ENCODE measurements at regions of chr19 and their contacts with region 1.

Region 1: DNA sequence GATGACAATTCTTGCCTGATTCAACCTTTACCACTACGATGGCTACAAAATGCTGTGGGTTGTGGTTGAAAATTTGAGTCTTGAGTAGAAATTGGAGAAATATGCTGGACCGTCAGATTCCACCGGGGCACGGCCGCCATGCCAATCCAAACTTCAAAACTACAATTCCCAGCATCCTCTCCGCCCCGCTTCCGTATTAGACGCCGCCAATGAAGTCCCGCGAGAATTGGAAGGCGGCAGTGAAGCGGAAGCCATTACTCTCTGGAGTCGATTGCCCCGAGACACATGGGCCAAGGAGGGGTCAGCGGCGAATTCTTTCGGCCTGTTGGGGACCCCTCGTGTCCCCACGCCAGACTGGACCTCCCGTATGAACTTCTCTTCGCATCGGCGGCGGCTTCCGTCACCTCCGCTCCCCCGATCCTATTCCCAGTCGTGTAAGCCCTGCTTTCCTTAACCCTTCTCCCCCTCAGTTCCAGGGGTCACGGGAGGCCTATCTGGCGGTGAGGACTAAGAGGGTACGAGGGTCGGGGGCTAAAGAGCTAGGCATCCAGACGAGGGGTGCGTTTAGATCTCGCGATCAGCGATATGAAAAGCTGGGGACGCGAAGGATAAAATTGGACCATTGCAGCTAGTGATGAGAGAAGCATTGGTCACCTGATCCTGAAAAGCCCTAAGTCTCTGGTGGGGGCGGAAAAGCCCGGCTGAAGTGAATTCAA is at the start of gene ZNF317:
- DNase-seq: peak; percentile 81 to 96 (median 85)
- ATAC-seq: peak; percentile 90
- H3K4me3 ChIP-seq: peak within 1 kb of the TSS; percentile 94
- H3K4me3 Mint-ChIP-seq: peak within 1 kb of the TSS; percentile 96
- H3K27ac ChIP-seq: peak within 1 kb of the TSS; percentile 86 to 87
- H3K27ac Mint-ChIP-seq: peak within 1 kb of the TSS; percentile 94
- H3K4me1 ChIP-seq: peaks cover 22% of the 10 kb centered on the region
- H3K4me1 Mint-ChIP-seq: peaks cover 48% of the 10 kb centered on the region
- H3K27me3 ChIP-seq: no peaks in the 10 kb centered on the region
- H3K27me3 Mint-ChIP-seq: peaks cover 5% of the 10 kb centered on the region
- CTCF ChIP-seq: no peak
- total RNA-seq, gene ZNF317: 110 TPM

Region 2: DNA sequence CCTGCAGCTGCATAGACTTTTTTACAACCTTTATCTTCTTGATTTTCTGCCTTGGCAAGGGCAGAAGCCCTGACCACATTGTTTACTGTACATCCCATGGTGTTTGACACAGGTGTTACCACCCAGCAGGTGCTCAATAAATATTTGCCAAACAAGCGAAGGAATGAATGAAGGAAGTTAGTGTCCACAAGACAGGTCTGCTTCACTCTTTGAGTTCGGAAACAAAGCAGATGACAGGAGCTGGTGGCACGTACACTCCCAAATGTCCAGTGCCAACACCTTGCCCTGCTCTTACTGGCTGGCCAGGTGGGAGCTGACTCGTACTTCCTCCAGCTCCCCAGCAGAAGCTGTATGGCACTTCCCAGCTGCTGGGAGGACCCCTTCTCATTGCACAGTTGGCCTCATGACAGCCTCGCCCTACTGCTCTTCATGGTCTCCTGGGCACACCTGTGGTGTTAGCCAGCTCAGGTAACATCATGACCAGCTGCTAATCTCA is 108.1 kb before region 1 on chr19:
- CTCF ChIA-PET with region 1: no interaction called
- POLR2A ChIA-PET with region 1: no interaction called
- intact Hi-C with region 1: no loop called
- DNase-seq: no peak
- ATAC-seq: no peak
- H3K4me3 ChIP-seq: no peak overlapping the region
- H3K4me3 Mint-ChIP-seq: no peak overlapping the region
- H3K27ac ChIP-seq: no peak overlapping the region
- H3K27ac Mint-ChIP-seq: no peak overlapping the region
- H3K4me1 ChIP-seq: no peaks in the 10 kb centered on the region
- H3K4me1 Mint-ChIP-seq: no peaks in the 10 kb centered on the region
- H3K27me3 ChIP-seq: peaks cover 0 to 2% of the 10 kb centered on the region in 2 experiments
- H3K27me3 Mint-ChIP-seq: peaks cover 10% of the 10 kb centered on the region
- CTCF ChIP-seq: no peak

Region 3: GRCh38 chr19:9205501-9206113 is 65.3 kb after region 1 on chr19:
- CTCF ChIA-PET with region 1: no interaction called
- POLR2A ChIA-PET with region 1: no interaction called
- intact Hi-C with region 1: loop called (anchors 1 to 5 kb)
- DNase-seq: peak; percentile 40 to 78 (median 58)
- ATAC-seq: peak; percentile 58
- H3K4me3 ChIP-seq: peak overlapping the region; percentile 20
- H3K4me3 Mint-ChIP-seq: peak overlapping the region; percentile 56
- H3K27ac ChIP-seq: no peak overlapping the region
- H3K27ac Mint-ChIP-seq: no peak overlapping the region
- H3K4me1 ChIP-seq: peaks cover 3% of the 10 kb centered on the region
- H3K4me1 Mint-ChIP-seq: no peaks in the 10 kb centered on the region
- H3K27me3 ChIP-seq: no peaks in the 10 kb centered on the region
- H3K27me3 Mint-ChIP-seq: peaks cover 8% of the 10 kb centered on the region
- CTCF ChIP-seq: peak; percentile 96

Region 4: DNA sequence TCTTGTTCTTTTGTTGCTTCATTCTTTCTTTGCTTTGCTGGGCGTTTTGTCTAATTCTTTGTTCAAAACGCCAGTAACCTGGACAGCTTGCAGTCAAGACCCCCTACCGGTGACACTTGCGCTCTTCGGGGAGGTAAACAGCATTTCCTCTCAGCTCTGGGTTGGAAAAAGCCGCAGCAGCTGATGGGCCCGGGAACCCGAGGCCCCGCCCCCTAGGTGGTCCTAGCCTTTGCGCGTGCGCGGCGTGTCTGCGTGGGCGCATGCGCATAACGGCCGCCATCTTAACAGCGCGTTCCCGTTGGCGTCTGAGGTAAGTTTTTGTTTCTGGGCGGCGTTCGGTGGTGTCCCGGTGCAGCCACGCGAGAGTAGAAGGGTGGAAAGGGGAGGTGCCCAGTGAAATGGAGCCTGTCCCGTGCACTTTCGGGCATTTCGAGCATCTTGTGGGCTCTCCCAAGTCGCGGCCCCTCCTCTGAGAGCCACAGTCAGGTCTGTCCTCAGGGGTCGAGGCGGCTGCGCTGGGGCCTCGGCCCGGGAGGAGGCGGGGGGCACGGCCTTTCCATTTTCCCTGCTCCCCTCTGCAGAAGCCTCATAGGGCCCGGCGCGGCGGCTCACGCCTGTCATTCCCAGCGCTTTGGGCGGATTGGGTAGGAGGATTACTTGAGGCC is 183.7 kb after region 1 on chr19 and contains the start of gene ZNF559:
- CTCF ChIA-PET with region 1: no interaction called
- POLR2A ChIA-PET with region 1: no interaction called
- intact Hi-C with region 1: loop called (anchors 1 to 5 kb)
- DNase-seq: peak; percentile 94 to 98 (median 97)
- ATAC-seq: peak; percentile 97
- H3K4me3 ChIP-seq: peak within 1 kb of the TSS; percentile 87
- H3K4me3 Mint-ChIP-seq: peak within 1 kb of the TSS; percentile 96
- H3K27ac ChIP-seq: peak within 1 kb of the TSS; percentile 80 to 83
- H3K27ac Mint-ChIP-seq: peak within 1 kb of the TSS; percentile 90
- H3K4me1 ChIP-seq: peaks cover 25% of the 10 kb centered on the region
- H3K4me1 Mint-ChIP-seq: peaks cover 33% of the 10 kb centered on the region
- H3K27me3 ChIP-seq: no peaks in the 10 kb centered on the region
- H3K27me3 Mint-ChIP-seq: no peaks in the 10 kb centered on the region
- CTCF ChIP-seq: peak; percentile 65
- total RNA-seq, gene ZNF559: 4.7 to 6.5 TPM

Region 5: GRCh38 chr19:9621156-9622037 is 481.1 kb after region 1 on chr19 and contains the start of gene ZNF561:
- CTCF ChIA-PET with region 1: no interaction called
- POLR2A ChIA-PET with region 1: no interaction called
- intact Hi-C with region 1: loop called (anchors 1 to 5 kb)
- DNase-seq: peak; percentile 81 to 96 (median 85)
- ATAC-seq: peak; percentile 90
- H3K4me3 ChIP-seq: peak within 1 kb of the TSS; percentile 77
- H3K4me3 Mint-ChIP-seq: peak within 1 kb of the TSS; percentile 97
- H3K27ac ChIP-seq: peak within 1 kb of the TSS; percentile 93 to 94
- H3K27ac Mint-ChIP-seq: peak within 1 kb of the TSS; percentile 99
- H3K4me1 ChIP-seq: peaks cover 20% of the 10 kb centered on the region
- H3K4me1 Mint-ChIP-seq: peaks cover 25% of the 10 kb centered on the region
- H3K27me3 ChIP-seq: no peaks in the 10 kb centered on the region
- H3K27me3 Mint-ChIP-seq: peaks cover 4% of the 10 kb centered on the region
- CTCF ChIP-seq: no peak
- total RNA-seq, gene ZNF561: 45.1 to 46.2 TPM

Region 6: GRCh38 chr19:10027158-10027693 is 886.9 kb after region 1 on chr19:
- CTCF ChIA-PET with region 1: no interaction called
- POLR2A ChIA-PET with region 1: no interaction called
- intact Hi-C with region 1: loop called in 1 of 2 experiments (anchors 5 kb)
- DNase-seq: no peak
- ATAC-seq: no peak
- H3K4me3 ChIP-seq: no peak overlapping the region
- H3K4me3 Mint-ChIP-seq: no peak overlapping the region
- H3K27ac ChIP-seq: no peak overlapping the region
- H3K27ac Mint-ChIP-seq: no peak overlapping the region
- H3K4me1 ChIP-seq: peaks cover 8% of the 10 kb centered on the region
- H3K4me1 Mint-ChIP-seq: no peaks in the 10 kb centered on the region
- H3K27me3 ChIP-seq: peaks cover 5 to 14% of the 10 kb centered on the region in 2 experiments
- H3K27me3 Mint-ChIP-seq: peaks cover 8% of the 10 kb centered on the region
- CTCF ChIP-seq: no peak